Activated naive CD8-positive, alpha-beta T cell treated with anti-CD3 and anti-CD28 coated beads, Interleukin-2, amount 10 ng/mL, durations not matched to agents 7 days and 5 days (primary cell): ENCODE measurements at regions of chr6 and their contacts with region 1.

Region 1: GRCh38 chr6:4916954-4917561 is 86.8 kb downstream of the RPP40 start:
- DNase-seq: no peak
- ATAC-seq: peak; percentile 76
- H3K4me3 Mint-ChIP-seq: peak overlapping the region; percentile 58
- H3K27ac Mint-ChIP-seq: peak overlapping the region; percentile 88
- H3K4me1 Mint-ChIP-seq: peaks cover 46% of the 10 kb centered on the region
- H3K27me3 Mint-ChIP-seq: no peaks in the 10 kb centered on the region

Region 2: GRCh38 chr6:4906293-4907276 is 10.5 kb before region 1 on chr6:
- POLR2A ChIA-PET with region 1: interaction called, 15 read pairs
- DNase-seq: no peak
- ATAC-seq: peak; percentile 57
- H3K4me3 Mint-ChIP-seq: peak overlapping the region; percentile 83
- H3K27ac Mint-ChIP-seq: peak overlapping the region; percentile 95
- H3K4me1 Mint-ChIP-seq: peaks cover 41% of the 10 kb centered on the region
- H3K27me3 Mint-ChIP-seq: no peaks in the 10 kb centered on the region

Region 3: DNA sequence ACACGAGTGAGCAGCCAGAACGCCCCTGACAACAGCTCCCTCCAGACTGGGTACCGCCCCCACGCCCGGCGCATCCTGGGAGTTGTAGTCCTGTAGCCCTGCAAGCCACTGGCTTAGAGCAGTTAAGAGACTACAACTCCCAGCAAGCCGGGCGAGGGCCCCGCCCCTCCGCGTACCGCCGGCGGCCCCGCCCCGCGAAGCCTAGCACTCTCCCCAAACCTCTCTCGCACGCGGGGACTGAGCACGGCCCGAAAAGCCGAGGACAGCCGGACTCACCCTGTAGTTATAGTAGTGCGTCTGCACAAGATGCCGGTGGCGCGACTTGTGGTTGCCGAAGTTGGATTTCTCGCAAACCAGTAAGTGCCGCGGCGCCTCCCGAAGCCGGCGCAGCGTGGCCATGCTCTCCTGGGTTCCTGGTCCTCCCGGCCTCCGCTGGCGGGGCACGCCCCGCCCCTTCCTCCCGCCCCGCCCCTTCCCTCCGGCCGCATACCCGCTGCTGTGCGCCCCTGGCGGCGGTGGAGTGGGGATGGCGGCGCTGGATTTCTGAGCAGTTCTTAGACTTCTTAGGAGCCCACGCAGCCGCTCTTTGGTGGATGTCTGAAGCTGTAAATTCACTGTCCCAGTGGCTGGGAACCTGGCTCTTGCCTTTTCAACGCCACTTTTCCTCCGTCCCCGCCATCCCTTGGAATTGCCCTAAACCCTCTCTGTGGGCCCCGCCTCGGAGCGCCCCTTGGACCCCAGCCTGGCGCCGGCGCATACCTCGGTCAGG is 86.7 kb after region 1 on chr6 and contains the start of gene RPP40:
- POLR2A ChIA-PET with region 1: no interaction called
- DNase-seq: peak; percentile 98
- ATAC-seq: peak; percentile 91
- H3K4me3 Mint-ChIP-seq: peak within 1 kb of the TSS; percentile 89
- H3K27ac Mint-ChIP-seq: peak within 1 kb of the TSS; percentile 93
- H3K4me1 Mint-ChIP-seq: peaks cover 17% of the 10 kb centered on the region
- H3K27me3 Mint-ChIP-seq: no peaks in the 10 kb centered on the region
- total RNA-seq, gene RPP40: 3.4 to 4.0 TPM